Activated CD4-positive, alpha-beta T cell treated with anti-CD3 and anti-CD28 coated beads, Interleukin-2, amount 10 ng/mL, durations not matched to agents 7 days and 5 days (primary cell): ENCODE measurements at regions of chr5 and their contacts with region 1.

Region 1: GRCh38 chr5:139262742-139263445 is 30.6 kb upstream of the MATR3 start:
- DNase-seq: peak; percentile 72
- H3K4me3 Mint-ChIP-seq: no peak overlapping the region
- H3K27ac Mint-ChIP-seq: no peak overlapping the region
- H3K4me1 Mint-ChIP-seq: peaks cover 6% of the 10 kb centered on the region
- H3K27me3 Mint-ChIP-seq: peaks cover 17% of the 10 kb centered on the region

Region 2: GRCh38 chr5:139251281-139251687 is 11.6 kb before region 1 on chr5:
- CTCF ChIA-PET with region 1: interaction called, 11 read pairs
- POLR2A ChIA-PET with region 1: no interaction called
- DNase-seq: peak; percentile 49
- H3K4me3 Mint-ChIP-seq: no peak overlapping the region
- H3K27ac Mint-ChIP-seq: no peak overlapping the region
- H3K4me1 Mint-ChIP-seq: peaks cover 19% of the 10 kb centered on the region
- H3K27me3 Mint-ChIP-seq: no peaks in the 10 kb centered on the region

Region 3: DNA sequence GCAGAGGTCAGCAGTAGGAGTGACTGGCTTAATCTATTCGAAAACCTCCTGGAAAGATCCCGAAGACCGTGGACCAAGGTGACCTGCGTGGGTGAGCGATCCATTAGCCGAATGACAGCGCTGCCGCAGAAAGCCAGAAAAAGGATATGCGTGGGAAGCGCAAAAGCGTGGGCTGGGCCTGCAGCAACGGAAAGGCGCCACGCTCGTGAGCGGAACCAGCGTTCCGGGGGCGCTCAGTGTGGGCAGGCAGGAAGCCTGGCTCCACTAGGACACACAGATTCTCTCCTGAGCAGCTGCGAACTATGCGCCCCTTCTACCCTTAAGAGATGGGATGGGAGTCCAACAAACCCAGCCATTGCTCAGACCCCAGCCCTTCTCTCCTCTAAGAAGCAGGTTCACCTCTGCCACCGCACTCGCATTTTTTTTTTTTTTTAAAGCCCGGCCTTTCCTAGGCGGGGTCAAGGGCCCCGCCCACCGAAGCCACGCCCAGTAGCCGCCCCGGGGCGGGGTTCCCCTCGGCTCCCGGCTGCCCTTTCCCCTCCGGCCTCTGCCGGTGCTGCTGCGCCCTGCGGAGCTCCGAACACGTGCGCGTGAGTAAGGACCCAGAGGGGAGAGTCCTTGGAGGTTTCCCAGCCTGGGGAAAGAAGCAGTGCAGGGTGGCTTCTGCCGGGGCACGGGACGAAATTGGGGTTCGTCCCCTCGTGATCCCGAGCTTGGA is 10.8 kb after region 1 on chr5:
- CTCF ChIA-PET with region 1: interaction called, 11 read pairs
- POLR2A ChIA-PET with region 1: no interaction called
- DNase-seq: peak; percentile 86
- H3K4me3 Mint-ChIP-seq: peak overlapping the region; percentile 86
- H3K27ac Mint-ChIP-seq: peak overlapping the region; percentile 88
- H3K4me1 Mint-ChIP-seq: peaks cover 54% of the 10 kb centered on the region
- H3K27me3 Mint-ChIP-seq: peaks cover 3% of the 10 kb centered on the region